ENCODE measurements at regions of chr10 and their contacts with region 1.

Region 1: DNA sequence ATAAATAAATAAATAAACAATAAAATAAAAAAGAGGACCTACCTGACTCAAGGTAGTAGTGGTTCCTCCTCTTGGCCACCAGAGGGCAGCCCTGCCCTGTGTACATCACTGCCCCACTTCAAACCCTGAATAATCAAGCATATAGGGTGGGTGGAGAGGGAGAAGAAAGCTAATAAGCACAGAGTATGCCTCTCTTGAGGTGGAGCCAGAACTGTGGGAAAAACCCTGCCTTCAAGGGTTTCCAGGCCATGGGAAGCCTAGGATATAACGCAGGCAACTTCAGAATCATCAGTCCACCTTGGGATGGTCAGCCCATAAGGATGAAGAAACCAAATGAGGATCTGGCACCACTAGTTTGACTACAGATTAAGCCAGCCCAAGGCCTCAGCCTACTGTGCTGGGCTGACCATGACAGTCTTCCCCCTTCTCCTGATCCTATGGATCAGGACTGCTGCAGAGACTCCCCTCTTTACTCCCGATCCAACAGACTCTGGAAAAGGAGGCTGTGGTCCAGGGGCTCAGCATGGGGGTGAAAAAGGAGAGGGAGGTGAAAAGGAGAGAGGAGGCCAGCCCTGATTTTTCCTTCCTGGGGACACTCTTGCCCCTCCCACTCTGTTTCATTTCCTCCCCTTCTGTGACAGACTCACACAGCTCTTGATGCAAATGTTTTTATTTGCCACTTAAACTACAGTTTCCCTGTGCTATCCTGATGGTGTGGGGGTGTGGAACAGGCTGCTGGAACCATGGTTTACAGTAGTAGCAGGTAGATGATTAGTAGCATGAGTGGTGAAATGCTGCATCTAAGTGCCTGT is 10.1 kb downstream of the AVPI1 start:
- DNase-seq: peak; percentile 34 to 53
- H3K4me3 ChIP-seq: no peak overlapping the region
- H3K27ac ChIP-seq: no peak overlapping the region
- H3K4me1 ChIP-seq: no peaks in the 10 kb centered on the region
- H3K27me3 ChIP-seq: no peaks in the 10 kb centered on the region
- CTCF ChIP-seq: peak; percentile 81

Region 2: DNA sequence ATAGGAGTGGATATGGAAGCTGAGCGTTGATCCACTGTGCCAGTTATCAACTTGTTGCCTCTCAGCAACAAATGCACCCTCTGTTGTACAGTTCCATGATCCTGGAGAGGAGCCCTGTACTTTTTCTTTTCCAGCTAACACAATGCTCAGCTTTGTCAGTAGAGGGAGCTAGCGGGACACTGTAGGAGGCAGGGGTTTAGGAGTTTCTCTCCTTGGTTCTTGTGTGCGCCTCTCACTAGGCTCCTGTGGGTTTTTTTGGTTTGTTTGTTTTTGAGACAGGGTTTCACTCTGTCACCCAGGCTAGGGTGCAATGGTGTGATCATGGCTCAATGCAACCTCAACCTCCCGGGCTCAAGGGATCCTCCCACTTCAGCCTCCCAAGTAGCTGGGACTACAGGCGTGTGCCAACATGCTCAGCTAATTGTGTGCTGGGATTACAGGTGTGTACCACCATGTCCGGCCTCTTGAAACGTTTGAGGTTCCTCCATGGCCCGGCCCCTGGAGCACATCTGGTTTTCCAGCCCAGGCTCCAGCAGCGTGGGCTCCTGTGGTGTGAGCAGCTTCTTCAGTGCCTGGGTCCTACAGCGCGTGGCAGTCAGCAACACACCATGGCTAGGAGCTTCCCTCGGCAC is 24.6 kb after region 1 on chr10:
- CTCF ChIA-PET with region 1: no interaction called
- POLR2A ChIA-PET with region 1: no interaction called
- intact Hi-C with region 1: loop called (anchors 2 kb)
- DNase-seq: peak in 1 of 2 experiments; percentile 29
- H3K4me3 ChIP-seq: no peak overlapping the region
- H3K27ac ChIP-seq: no peak overlapping the region
- H3K4me1 ChIP-seq: no peaks in the 10 kb centered on the region
- H3K27me3 ChIP-seq: no peaks in the 10 kb centered on the region
- CTCF ChIP-seq: peak; percentile 74

Region 3: DNA sequence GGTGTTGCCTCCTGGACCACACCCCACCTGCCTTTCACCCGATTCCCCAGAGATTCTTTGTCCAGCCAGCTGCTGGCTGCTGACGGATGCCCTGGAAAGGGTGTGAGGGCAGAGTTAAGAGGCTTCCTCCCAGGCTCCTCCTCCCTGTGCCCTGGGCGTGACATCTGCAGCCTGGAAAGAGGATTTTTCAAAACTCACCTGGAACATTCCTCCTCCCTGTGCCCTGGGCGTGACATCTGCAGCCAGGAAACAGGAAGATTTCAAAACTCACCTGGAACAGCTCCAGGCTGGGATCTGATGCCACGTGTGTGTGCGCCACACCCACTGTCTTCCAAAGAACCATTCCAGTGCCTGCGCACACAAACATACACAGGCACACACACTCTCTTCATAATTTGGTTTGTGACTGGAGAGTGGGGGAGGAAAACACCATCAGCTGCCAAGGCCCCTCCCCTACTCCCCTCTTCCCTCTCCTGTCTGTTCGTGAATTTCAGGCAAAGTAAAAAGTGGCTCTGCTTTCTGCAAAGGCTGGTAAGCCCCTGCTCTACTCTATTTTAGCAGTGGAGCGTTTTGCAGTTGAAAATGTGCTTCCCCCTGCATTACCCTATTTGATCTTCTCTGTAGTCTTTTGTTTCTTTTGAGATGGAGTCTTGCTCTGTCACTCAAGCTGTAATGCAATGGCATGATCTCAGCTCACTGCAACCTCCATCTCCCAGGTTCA is 41.8 kb after region 1 on chr10:
- CTCF ChIA-PET with region 1: no interaction called
- POLR2A ChIA-PET with region 1: no interaction called
- intact Hi-C with region 1: no loop called
- DNase-seq: peak; percentile 90 to 97
- H3K4me3 ChIP-seq: no peak overlapping the region
- H3K27ac ChIP-seq: peak overlapping the region; percentile 59
- H3K4me1 ChIP-seq: peaks cover 46% of the 10 kb centered on the region
- H3K27me3 ChIP-seq: no peaks in the 10 kb centered on the region
- CTCF ChIP-seq: no peak

Measured in PC-9 (cell line).